A673 (cell line): ENCODE measurements at regions of chr14 and their contacts with region 1.

Region 1: DNA sequence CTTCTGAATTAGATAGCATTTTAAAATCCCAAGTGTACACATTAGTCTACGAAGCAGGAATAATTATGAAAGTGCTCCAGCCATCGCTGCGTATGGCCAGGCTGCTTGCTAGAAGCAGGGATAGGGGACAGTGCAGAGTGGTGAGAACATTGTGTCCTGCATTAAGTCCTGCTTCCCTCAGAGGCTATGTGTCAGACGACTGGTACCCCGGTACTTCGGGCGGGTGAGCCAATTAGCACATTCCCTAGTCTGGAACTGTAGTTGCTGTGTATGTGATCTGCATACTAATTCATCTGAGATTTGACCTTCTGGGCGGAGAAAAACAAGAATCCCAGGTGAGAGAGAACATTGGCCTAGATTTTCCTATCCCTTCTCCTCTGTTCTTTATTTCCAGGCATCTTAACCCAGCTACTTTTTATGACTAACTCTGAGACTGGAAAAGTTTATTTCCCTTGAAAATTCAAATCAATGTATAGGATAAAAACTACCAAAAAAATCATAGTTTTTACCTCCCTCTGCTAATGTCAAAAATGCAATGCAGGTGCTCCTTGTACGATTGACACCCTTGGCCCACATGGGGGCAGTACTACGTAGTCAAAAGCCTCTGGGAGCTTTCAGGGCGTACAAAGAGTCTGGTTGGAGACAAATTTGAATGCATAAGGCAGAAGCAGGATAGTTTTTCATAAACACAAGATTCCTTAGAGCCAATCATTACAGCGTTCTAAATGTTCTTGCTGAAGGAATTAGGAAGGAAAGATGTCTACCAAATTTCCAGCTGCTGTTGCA is 764.3 kb downstream of the NOVA1 start:
- DNase-seq: peak; percentile 87
- H3K4me3 ChIP-seq: no peak overlapping the region
- H3K27ac ChIP-seq: no peak overlapping the region
- H3K4me1 ChIP-seq: peaks cover 47% of the 10 kb centered on the region
- H3K27me3 ChIP-seq: no peaks in the 10 kb centered on the region
- CTCF ChIP-seq: peak; percentile 90

Region 2: GRCh38 chr14:26008290-26008689 is 174.8 kb after region 1 on chr14:
- CTCF ChIA-PET with region 1: no interaction called
- POLR2A ChIA-PET with region 1: no interaction called
- intact Hi-C with region 1: loop called (anchors 10 kb)
- DNase-seq: peak; percentile 66
- H3K4me3 ChIP-seq: no peak overlapping the region
- H3K27ac ChIP-seq: no peak overlapping the region
- H3K4me1 ChIP-seq: no peaks in the 10 kb centered on the region
- H3K27me3 ChIP-seq: no peaks in the 10 kb centered on the region
- CTCF ChIP-seq: peak; percentile 61

Region 3: GRCh38 chr14:26128931-26129671 is 295.6 kb after region 1 on chr14:
- CTCF ChIA-PET with region 1: interaction called, 3 read pairs
- POLR2A ChIA-PET with region 1: no interaction called
- intact Hi-C with region 1: loop called (anchors 5 kb)
- DNase-seq: peak; percentile 95
- H3K4me3 ChIP-seq: peak overlapping the region; percentile 11
- H3K27ac ChIP-seq: peak overlapping the region; percentile 93
- H3K4me1 ChIP-seq: peaks cover 59% of the 10 kb centered on the region
- H3K27me3 ChIP-seq: no peaks in the 10 kb centered on the region
- CTCF ChIP-seq: no peak

Region 4: DNA sequence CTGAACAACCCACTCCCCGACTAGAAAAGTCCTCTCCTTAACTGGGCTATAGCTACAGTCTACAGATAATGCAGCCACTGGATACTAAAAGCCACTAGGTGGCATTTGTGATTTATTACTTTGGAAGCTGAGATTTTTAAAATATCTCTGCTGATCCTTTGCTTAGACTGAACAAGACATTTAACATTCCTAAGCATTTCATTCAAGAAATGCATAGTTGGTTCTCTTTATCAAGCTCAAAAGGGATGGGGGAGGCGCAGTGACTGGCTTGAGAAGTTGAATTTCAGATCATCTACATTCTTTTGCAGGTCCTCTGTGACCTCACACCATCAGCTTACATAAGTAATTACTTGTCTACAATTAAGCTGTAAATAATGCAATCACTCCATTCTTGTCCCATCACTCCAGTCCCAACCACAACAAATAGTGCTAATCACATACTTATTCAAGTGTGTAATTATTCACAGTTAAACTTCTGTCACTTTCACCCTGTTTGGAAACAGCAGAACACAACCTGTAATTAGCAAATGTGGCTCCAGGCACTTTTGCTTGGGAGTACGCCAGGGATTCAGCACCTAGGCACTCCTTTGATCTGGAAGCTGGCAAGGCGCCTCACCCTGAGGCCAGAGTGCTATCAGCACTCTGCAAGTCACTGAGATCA is 560.7 kb after region 1 on chr14:
- CTCF ChIA-PET with region 1: no interaction called
- POLR2A ChIA-PET with region 1: no interaction called
- intact Hi-C with region 1: loop called (anchors 5 kb)
- DNase-seq: peak; percentile 33
- H3K4me3 ChIP-seq: no peak overlapping the region
- H3K27ac ChIP-seq: no peak overlapping the region
- H3K4me1 ChIP-seq: peaks cover 21% of the 10 kb centered on the region
- H3K27me3 ChIP-seq: peaks cover 42% of the 10 kb centered on the region
- CTCF ChIP-seq: peak; percentile 55

Region 5: GRCh38 chr14:27573018-27573417 is 1739.5 kb after region 1 on chr14:
- CTCF ChIA-PET with region 1: no interaction called
- POLR2A ChIA-PET with region 1: no interaction called
- intact Hi-C with region 1: no loop called
- DNase-seq: no peak
- H3K4me3 ChIP-seq: no peak overlapping the region
- H3K27ac ChIP-seq: no peak overlapping the region
- H3K4me1 ChIP-seq: no peaks in the 10 kb centered on the region
- H3K27me3 ChIP-seq: no peaks in the 10 kb centered on the region
- CTCF ChIP-seq: no peak